CD8-positive, alpha-beta T cell (primary cell): ENCODE measurements at regions of chr11 and their contacts with region 1.

Region 1: DNA sequence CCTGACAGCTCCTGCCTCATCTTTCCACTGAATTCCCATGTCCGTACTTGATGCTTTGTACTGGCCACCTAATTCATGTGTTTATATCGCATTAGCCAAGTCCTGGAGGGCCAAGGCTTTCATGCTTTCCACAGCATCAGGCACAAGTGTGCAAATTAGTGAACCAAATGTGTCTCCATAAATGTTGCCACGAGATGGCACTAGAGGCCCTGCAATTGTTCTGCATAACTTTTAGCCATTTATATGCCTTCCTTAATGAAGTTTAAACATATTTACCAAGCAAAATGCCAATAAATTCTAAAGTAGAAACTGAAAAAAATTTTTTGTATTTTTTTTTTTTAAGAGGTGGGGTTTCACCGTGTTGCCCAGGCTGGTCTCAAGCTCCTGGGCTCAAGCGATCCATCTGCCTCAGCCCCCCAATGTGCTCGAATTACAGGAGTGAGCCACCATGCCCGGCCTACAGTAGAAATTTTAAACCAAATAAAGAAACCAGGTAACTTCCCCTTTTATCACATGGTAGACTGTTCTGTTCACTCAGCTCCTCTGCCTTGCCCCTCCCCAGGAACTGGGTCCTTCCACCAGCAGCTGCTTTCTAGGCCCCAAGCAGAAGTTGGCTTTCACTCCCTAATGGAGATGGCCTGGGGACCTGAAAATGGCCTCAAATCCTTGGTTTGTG is 20.8 kb upstream of the IL18BP start:
- DNase-seq: peak; percentile 25 to 69 (median 55)
- ATAC-seq: peak; percentile 62
- H3K4me3 ChIP-seq: no peak overlapping the region
- H3K4me3 Mint-ChIP-seq: no peak overlapping the region
- H3K27ac ChIP-seq: no peak overlapping the region
- H3K27ac Mint-ChIP-seq: no peak overlapping the region
- H3K4me1 ChIP-seq: no peaks in the 10 kb centered on the region
- H3K4me1 Mint-ChIP-seq: no peaks in the 10 kb centered on the region
- H3K27me3 ChIP-seq: no peaks in the 10 kb centered on the region
- H3K27me3 Mint-ChIP-seq: no peaks in the 10 kb centered on the region
- CTCF ChIP-seq: peak; percentile 78

Region 2: DNA sequence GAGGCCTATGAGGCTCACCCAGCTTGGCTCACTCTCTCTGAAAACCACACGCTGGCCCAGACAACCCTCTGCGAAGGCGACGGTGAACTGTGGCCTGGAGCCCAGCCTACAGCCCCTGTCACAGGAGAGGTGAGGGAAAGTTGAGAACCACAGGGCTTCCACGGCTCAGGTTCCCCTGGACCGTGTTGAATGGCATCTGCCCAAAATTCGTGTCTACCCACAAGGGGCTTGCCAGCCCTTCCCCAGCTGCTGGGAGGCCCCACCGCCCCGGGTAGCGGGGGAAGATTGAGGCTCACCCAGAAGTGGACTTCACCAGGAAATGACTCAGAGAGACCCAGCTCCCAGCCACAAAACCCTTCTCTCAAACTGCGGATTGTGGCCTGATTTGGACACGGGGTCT is 1382.4 kb before region 1 on chr11:
- CTCF ChIA-PET with region 1: no interaction called
- POLR2A ChIA-PET with region 1: no interaction called
- intact Hi-C with region 1: no loop called
- DNase-seq: no peak
- ATAC-seq: no peak
- H3K4me3 ChIP-seq: no peak overlapping the region
- H3K4me3 Mint-ChIP-seq: no peak overlapping the region
- H3K27ac ChIP-seq: no peak overlapping the region
- H3K27ac Mint-ChIP-seq: no peak overlapping the region
- H3K4me1 ChIP-seq: no peaks in the 10 kb centered on the region
- H3K4me1 Mint-ChIP-seq: peaks cover 4% of the 10 kb centered on the region
- H3K27me3 ChIP-seq: no peaks in the 10 kb centered on the region
- H3K27me3 Mint-ChIP-seq: peaks cover 20% of the 10 kb centered on the region
- CTCF ChIP-seq: no peak

Region 3: DNA sequence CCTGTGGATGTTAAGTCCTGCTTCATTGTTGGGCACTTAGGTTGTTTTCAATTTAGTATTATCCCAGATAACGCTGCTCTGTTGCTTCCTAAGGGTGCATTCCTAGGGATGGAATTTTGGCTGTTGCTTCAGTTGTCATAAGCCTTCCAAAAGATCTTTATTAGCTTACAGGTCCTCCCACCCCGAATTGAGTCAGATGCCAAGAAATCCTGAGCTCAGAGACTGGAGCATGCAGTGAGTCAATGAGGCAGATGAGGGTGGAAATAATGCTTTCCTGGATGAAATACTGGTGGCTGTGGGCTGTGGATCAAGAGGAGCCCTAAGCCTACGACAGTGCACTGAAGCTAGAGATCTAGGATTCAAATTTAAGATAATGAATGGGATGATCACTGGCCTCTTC is 10.2 kb after region 1 on chr11:
- CTCF ChIA-PET with region 1: interaction called, 15 read pairs
- POLR2A ChIA-PET with region 1: interaction called, 8 read pairs
- intact Hi-C with region 1: no loop called
- DNase-seq: no peak
- ATAC-seq: no peak
- H3K4me3 ChIP-seq: no peak overlapping the region
- H3K4me3 Mint-ChIP-seq: no peak overlapping the region
- H3K27ac ChIP-seq: no peak overlapping the region
- H3K27ac Mint-ChIP-seq: no peak overlapping the region
- H3K4me1 ChIP-seq: no peaks in the 10 kb centered on the region
- H3K4me1 Mint-ChIP-seq: no peaks in the 10 kb centered on the region
- H3K27me3 ChIP-seq: no peaks in the 10 kb centered on the region
- H3K27me3 Mint-ChIP-seq: no peaks in the 10 kb centered on the region
- CTCF ChIP-seq: no peak

Region 4: GRCh38 chr11:72015511-72016171 is 37.8 kb after region 1 on chr11:
- CTCF ChIA-PET with region 1: interaction called, 28 read pairs
- POLR2A ChIA-PET with region 1: no interaction called
- intact Hi-C with region 1: no loop called
- DNase-seq: peak in 1 of 9 experiments; percentile 26
- ATAC-seq: no peak
- H3K4me3 ChIP-seq: no peak overlapping the region
- H3K4me3 Mint-ChIP-seq: no peak overlapping the region
- H3K27ac ChIP-seq: no peak overlapping the region
- H3K27ac Mint-ChIP-seq: no peak overlapping the region
- H3K4me1 ChIP-seq: no peaks in the 10 kb centered on the region
- H3K4me1 Mint-ChIP-seq: peaks cover 1% of the 10 kb centered on the region
- H3K27me3 ChIP-seq: no peaks in the 10 kb centered on the region
- H3K27me3 Mint-ChIP-seq: no peaks in the 10 kb centered on the region
- CTCF ChIP-seq: no peak

Region 5: GRCh38 chr11:72179804-72180396 is 202.0 kb after region 1 on chr11:
- CTCF ChIA-PET with region 1: interaction called, 22 read pairs
- POLR2A ChIA-PET with region 1: no interaction called
- intact Hi-C with region 1: loop called in 1 of 2 experiments (anchors 2 kb)
- DNase-seq: no peak
- ATAC-seq: no peak
- H3K4me3 ChIP-seq: no peak overlapping the region
- H3K4me3 Mint-ChIP-seq: no peak overlapping the region
- H3K27ac ChIP-seq: no peak overlapping the region
- H3K27ac Mint-ChIP-seq: no peak overlapping the region
- H3K4me1 ChIP-seq: no peaks in the 10 kb centered on the region
- H3K4me1 Mint-ChIP-seq: peaks cover 2% of the 10 kb centered on the region
- H3K27me3 ChIP-seq: no peaks in the 10 kb centered on the region
- H3K27me3 Mint-ChIP-seq: peaks cover 8% of the 10 kb centered on the region
- CTCF ChIP-seq: no peak

Region 6: DNA sequence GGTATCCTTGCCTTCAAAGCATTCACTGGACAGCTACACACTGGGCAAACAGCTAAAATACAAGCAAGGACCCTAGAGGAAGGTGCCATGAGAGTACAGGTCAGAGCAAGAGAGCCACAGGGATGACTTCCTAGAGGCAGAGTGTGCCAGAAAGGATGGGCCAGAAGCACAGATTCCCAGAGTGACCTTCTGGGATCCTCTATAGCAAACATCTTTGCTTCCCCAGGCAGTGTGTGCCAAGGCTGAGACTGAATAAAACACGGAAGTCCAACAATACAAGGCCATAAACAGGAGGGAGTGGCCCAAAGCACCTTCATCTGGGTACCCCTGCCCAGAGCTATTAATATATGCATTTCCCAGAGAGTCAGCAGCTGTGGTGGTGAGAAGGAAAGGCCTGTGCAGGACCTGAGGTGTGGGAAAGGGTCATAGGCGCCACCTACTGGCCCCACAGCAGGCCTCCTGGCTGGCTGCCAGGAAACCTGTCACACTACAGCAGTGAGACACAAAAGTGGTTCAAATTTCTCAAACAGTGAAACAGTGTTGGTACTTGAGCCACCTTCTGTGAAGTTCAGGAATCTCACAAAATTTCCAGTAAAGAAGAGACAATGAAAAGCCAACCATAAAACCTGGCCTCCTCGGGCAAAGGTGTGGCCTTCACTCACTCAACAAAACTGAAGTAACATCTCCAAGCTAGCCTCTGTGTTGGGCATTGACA is 436.2 kb after region 1 on chr11:
- CTCF ChIA-PET with region 1: interaction called, 4 read pairs
- POLR2A ChIA-PET with region 1: no interaction called
- intact Hi-C with region 1: loop called in 1 of 2 experiments (anchors 10 kb)
- DNase-seq: peak; percentile 47 to 81 (median 75)
- ATAC-seq: peak; percentile 81
- H3K4me3 ChIP-seq: no peak overlapping the region
- H3K4me3 Mint-ChIP-seq: no peak overlapping the region
- H3K27ac ChIP-seq: no peak overlapping the region
- H3K27ac Mint-ChIP-seq: no peak overlapping the region
- H3K4me1 ChIP-seq: no peaks in the 10 kb centered on the region
- H3K4me1 Mint-ChIP-seq: peaks cover 28% of the 10 kb centered on the region
- H3K27me3 ChIP-seq: no peaks in the 10 kb centered on the region
- H3K27me3 Mint-ChIP-seq: no peaks in the 10 kb centered on the region
- CTCF ChIP-seq: peak; percentile 74